Caco-2 (cell line): ENCODE measurements at regions of chr3 and their contacts with region 1.

Region 1: DNA sequence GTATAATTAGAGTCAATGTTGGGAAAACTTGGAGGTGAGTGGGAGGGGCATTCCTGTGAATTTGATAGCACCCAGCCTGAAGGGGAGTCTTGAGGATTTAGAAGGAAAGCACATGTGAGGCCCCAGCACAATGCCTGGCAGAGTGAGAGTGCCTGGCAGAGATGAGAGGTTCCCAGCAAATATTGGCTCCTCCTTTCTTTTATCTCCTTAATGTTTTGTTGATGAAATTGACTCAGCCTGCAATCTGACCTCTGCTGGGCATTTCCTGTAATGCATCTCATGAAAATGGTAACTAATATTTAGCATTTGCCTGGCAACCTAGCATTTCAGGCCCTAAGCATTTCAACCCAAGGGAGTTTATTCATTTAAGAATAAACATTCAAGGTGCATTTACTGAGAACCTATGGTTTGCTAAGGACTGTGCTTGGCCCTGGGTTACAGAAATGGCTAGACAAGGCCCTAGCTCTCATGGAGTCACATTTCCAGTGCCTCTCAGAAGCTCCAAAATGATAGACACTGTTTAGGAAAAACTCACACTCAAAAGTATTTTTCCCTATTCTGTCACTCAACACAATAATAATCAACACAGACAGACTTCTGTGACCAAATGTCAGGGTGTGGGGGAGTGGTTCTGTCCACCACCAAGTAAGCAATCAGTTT is 19.0 kb downstream of the PDHB start:
- DNase-seq: peak in 1 of 2 experiments; percentile 54
- H3K4me3 ChIP-seq: no peak overlapping the region
- H3K4me3 Mint-ChIP-seq: no peak overlapping the region
- H3K27ac Mint-ChIP-seq: no peak overlapping the region
- H3K4me1 ChIP-seq: peaks cover 44% of the 10 kb centered on the region
- H3K4me1 Mint-ChIP-seq: peaks cover 19% of the 10 kb centered on the region
- H3K27me3 ChIP-seq: no peaks in the 10 kb centered on the region
- H3K27me3 Mint-ChIP-seq: no peaks in the 10 kb centered on the region
- CTCF ChIP-seq: peak; percentile 71 to 74

Region 2: GRCh38 chr3:58180940-58181587 is 233.6 kb before region 1 on chr3:
- CTCF ChIA-PET with region 1: no interaction called
- POLR2A ChIA-PET with region 1: no interaction called
- intact Hi-C with region 1: no loop called
- DNase-seq: no peak
- H3K4me3 ChIP-seq: no peak overlapping the region
- H3K4me3 Mint-ChIP-seq: no peak overlapping the region
- H3K27ac Mint-ChIP-seq: peak overlapping the region; percentile 59
- H3K4me1 ChIP-seq: peaks cover 9% of the 10 kb centered on the region
- H3K4me1 Mint-ChIP-seq: peaks cover 16% of the 10 kb centered on the region
- H3K27me3 ChIP-seq: no peaks in the 10 kb centered on the region
- H3K27me3 Mint-ChIP-seq: no peaks in the 10 kb centered on the region
- CTCF ChIP-seq: no peak

Region 3: GRCh38 chr3:58324391-58325390 is 90.0 kb before region 1 on chr3:
- CTCF ChIA-PET with region 1: no interaction called
- POLR2A ChIA-PET with region 1: no interaction called
- intact Hi-C with region 1: loop called (anchors 1 kb)
- DNase-seq: no peak
- H3K4me3 ChIP-seq: no peak overlapping the region
- H3K4me3 Mint-ChIP-seq: no peak overlapping the region
- H3K27ac Mint-ChIP-seq: no peak overlapping the region
- H3K4me1 ChIP-seq: peaks cover 17% of the 10 kb centered on the region
- H3K4me1 Mint-ChIP-seq: peaks cover 6% of the 10 kb centered on the region
- H3K27me3 ChIP-seq: no peaks in the 10 kb centered on the region
- H3K27me3 Mint-ChIP-seq: no peaks in the 10 kb centered on the region
- CTCF ChIP-seq: no peak

Region 4: GRCh38 chr3:58332575-58333188 is 82.0 kb before region 1 on chr3 and contains the start of gene PXK:
- CTCF ChIA-PET with region 1: interaction called, 6 read pairs
- POLR2A ChIA-PET with region 1: no interaction called
- intact Hi-C with region 1: loop called (anchors 1 kb)
- DNase-seq: peak; percentile 63 to 83
- H3K4me3 ChIP-seq: peak within 1 kb of the TSS; percentile 73
- H3K4me3 Mint-ChIP-seq: peak within 1 kb of the TSS; percentile 89
- H3K27ac Mint-ChIP-seq: peak within 1 kb of the TSS; percentile 66
- H3K4me1 ChIP-seq: no peaks in the 10 kb centered on the region
- H3K4me1 Mint-ChIP-seq: peaks cover 13% of the 10 kb centered on the region
- H3K27me3 ChIP-seq: no peaks in the 10 kb centered on the region; the same call in 1 of the 2 replicates
- H3K27me3 Mint-ChIP-seq: no peaks in the 10 kb centered on the region
- CTCF ChIP-seq: no peak
- total RNA-seq, gene PXK: 8.8 and 9.1 TPM in 2 replicates